Activated T-helper 2 cell treated with anti-CD3 and anti-CD28 coated beads, Interferon-gamma antibody, Interleukin-2, Interleukin-4, amounts not matched to agents 10 μg/mL and 5 μg/mL and 100 μg/mL, durations not matched to agents 14 hours and 24 hours and 36 hours (primary cell): ENCODE measurements at regions of chr15 and their contacts with region 1.

Region 1: DNA sequence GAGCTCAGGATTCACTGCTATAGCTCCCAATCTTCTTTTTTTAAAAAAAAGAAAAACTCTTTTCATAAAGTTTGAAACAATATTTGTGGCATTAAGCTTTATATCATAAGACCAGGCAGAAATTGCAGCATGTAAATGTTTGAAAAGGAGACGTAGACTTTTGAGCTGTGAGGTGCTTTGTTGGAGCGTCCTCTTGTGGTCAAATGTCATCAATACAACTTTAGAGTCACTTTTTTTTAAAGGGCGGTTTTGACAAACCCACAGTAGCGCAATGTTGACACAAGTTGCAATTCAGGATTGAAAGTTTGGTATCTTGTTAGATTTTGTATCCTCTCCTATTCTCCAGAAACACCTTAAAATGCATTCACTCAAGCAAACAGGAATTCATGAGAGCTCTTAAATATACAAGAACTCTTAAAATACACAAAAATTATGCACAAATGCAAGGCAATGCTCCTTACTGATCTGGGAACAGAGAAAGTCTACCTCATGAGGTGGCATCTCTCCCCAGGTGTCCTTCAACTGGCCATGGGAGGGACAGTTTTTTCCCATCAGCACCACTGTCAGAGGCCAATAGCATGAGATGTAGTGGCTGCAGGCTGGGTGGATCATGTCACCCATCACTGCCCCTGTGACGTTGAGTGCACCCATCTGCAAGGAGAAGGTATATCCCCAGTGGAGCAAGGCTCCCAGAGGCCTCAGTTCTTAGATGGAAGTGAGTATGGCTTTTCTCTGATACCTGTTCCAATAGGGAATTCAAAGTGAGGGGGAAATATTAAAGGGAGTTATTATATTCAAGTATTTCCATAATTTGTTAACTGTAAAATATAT is 70.7 kb downstream of the ANXA2 start:
- DNase-seq: no peak
- H3K4me3 Mint-ChIP-seq: no peak overlapping the region
- H3K27ac Mint-ChIP-seq: no peak overlapping the region
- H3K4me1 Mint-ChIP-seq: peaks cover 5% of the 10 kb centered on the region
- H3K27me3 Mint-ChIP-seq: peaks cover 58% of the 10 kb centered on the region

Region 2: GRCh38 chr15:59725172-59725486 is 601.9 kb before region 1 on chr15:
- intact Hi-C with region 1: loop called (anchors 1 kb)
- DNase-seq: no peak
- H3K4me3 Mint-ChIP-seq: no peak overlapping the region
- H3K27ac Mint-ChIP-seq: no peak overlapping the region
- H3K4me1 Mint-ChIP-seq: peaks cover 2% of the 10 kb centered on the region
- H3K27me3 Mint-ChIP-seq: peaks cover 20% of the 10 kb centered on the region

Region 3: GRCh38 chr15:59997070-59997701 is 329.9 kb before region 1 on chr15:
- intact Hi-C with region 1: loop called (anchors 5 kb)
- DNase-seq: peak; percentile 70
- H3K4me3 Mint-ChIP-seq: peak overlapping the region; percentile 85
- H3K27ac Mint-ChIP-seq: peak overlapping the region; percentile 86
- H3K4me1 Mint-ChIP-seq: peaks cover 66% of the 10 kb centered on the region
- H3K27me3 Mint-ChIP-seq: peaks cover 89% of the 10 kb centered on the region

Region 4: DNA sequence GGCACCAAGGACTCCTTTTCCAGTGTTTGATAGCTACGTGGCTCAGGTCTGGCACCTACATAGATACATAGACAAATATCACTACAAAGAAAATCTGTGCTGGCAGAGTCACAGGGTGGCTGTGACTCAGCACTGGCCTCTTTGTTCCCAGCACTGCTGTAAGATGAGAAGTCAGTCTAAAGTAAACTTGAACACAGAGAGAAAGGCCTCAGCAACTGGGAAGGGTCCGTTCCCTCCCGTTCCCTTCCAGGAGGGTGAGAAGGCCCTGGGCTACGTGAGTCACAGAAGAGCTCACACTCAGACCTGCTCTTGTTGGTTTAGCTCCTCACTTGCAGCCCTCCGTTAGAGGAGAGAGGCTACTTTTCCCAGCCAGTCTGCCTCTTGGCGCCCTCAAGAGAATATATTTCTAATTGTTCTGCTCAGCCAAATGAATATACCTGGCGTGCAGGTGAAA is 47.6 kb after region 1 on chr15:
- intact Hi-C with region 1: no loop called
- DNase-seq: no peak
- H3K4me3 Mint-ChIP-seq: no peak overlapping the region
- H3K27ac Mint-ChIP-seq: no peak overlapping the region
- H3K4me1 Mint-ChIP-seq: peaks cover 29% of the 10 kb centered on the region
- H3K27me3 Mint-ChIP-seq: no peaks in the 10 kb centered on the region

Region 5: DNA sequence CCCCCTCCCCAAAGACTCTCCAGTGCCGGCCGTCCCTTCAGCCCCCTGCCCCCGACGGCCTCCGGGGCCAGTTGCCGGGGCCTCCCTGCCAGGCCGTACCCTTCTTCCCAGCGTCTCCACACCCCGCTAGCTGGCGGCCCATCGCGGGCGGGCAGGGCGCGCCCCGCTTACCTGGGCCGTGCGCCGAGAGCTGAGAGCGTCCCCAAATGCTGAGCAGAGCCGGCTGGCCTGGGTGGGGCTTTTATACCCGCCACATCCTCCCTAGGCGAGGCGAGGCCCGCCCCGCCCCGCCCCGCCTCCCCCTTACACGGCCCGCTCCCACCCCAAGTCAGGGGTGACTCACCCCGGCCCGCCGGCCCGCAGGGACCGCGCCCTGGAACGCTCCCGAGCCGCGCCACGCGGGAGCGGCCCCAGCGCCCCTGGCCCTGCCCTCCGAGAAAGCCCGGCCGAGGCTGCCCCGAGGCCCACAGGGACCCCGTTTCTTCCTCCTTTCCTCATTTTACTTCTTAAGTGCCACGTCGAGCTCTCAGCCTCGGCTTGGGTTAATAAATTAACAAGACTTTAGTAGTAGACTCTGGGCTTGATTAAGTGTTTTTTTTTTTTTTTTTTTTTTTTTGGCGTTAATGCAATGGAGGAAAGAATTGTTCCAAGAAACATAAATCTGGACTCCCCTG is 70.9 kb after region 1 on chr15 and contains the start of gene ANXA2:
- intact Hi-C with region 1: no loop called
- DNase-seq: peak; percentile 81
- H3K4me3 Mint-ChIP-seq: peak within 1 kb of the TSS; percentile 96
- H3K27ac Mint-ChIP-seq: peak within 1 kb of the TSS; percentile 97
- H3K4me1 Mint-ChIP-seq: peaks cover 63% of the 10 kb centered on the region
- H3K27me3 Mint-ChIP-seq: peaks cover under 1% of the 10 kb centered on the region
- total RNA-seq, gene ANXA2: 262 and 267 TPM in 2 replicates